CD8-positive, alpha-beta T cell (primary cell): ENCODE measurements at regions of chr6 and their contacts with region 1.

Region 1: DNA sequence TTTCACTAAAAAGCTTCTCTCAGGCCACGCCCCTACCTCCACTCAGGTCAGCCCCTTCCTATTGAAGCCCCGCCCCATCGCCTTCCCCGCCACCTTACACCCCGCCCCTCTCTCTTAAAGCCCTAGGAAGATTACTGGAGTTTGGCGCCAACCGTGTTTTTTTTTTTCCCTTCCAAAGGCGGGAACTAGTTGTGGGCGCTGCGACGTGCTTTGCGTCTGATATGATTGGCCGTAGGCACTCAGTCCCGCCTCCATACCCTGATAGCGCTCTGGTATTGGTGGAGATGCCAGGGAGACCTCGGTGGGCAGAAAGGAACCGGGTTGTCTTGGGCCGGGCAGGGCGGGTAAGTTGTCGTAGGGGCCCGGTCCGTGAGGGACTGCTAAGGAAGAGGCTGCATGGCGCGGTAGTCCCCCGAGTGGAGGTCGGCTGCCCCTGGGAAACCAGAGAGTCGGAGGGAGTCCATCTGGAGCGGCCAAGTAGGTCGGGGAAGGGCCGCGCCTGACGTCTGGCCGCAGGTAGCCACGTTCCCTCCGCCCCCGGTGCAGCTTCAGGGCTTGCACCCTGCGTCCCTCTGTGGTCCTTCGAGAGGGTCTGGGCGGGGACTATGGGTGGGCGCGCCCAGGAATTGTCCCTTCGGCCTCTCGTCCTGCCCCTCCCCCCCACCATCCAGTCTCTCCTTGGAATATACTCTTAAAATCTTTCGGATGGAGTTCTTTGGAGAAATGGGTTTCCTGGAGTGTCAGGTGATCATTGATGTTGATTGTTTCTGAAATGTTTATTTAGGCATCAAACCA is at the start of gene CASP8AP2:
- DNase-seq: peak; percentile 88 to 99 (median 93)
- ATAC-seq: peak; percentile 94
- H3K4me3 ChIP-seq: peak within 1 kb of the TSS; percentile 82 to 95
- H3K4me3 Mint-ChIP-seq: peak within 1 kb of the TSS; percentile 99
- H3K27ac ChIP-seq: peak within 1 kb of the TSS; percentile 71 to 84
- H3K27ac Mint-ChIP-seq: peak within 1 kb of the TSS; percentile 97
- H3K4me1 ChIP-seq: peaks cover 14% of the 10 kb centered on the region
- H3K4me1 Mint-ChIP-seq: peaks cover 35% of the 10 kb centered on the region
- H3K27me3 ChIP-seq: no peaks in the 10 kb centered on the region
- H3K27me3 Mint-ChIP-seq: no peaks in the 10 kb centered on the region
- CTCF ChIP-seq: no peak
- total RNA-seq, gene CASP8AP2: 13.1 to 14.8 TPM

Region 2: DNA sequence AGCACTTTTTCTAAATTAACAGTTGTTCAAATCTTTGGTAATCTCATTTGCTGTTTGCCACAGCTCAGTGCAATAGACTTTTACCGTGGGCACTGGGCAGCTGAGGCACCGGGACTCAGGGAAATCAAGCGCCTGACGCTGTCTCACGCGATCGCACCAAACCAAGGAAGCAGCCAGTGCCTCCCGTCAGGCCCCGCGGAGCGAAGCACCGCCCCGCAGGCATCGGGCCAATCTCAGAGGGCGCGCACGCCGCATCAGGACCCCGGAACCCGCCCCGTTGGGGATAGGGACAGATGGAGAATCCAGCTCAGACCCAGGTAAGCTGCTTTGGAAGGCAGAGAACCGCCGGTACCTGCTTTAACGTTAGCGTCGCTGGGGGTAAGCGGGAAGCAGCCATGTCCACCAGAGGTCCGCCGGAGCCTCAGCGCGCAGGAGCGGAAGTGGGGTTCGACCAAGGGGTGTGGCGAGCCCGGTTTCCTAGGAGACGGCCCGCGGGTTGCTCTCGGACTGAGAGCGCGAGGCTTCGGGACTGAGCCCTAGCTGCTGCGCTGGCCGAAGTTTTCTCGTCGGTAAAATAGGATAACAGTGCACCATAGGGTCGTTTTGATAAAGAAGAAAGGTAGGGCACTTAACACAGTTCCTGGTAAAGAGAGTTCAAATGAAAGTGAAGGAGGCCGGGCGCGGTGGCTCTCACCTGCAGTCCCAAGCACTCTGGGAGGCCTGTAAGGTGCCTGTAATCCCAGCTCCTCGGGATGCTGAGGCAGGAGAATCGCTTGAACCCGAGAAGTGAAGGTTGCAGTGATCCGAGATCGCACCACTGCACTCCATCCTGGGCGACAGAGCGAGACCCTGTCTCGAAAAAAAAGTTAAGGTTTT is 191.2 kb before region 1 on chr6 and contains the start of gene LYRM2:
- CTCF ChIA-PET with region 1: no interaction called
- POLR2A ChIA-PET with region 1: interaction called, 6 read pairs
- intact Hi-C with region 1: loop called in 1 of 2 experiments (anchors 5 kb)
- DNase-seq: peak; percentile 83 to 95 (median 89)
- ATAC-seq: peak; percentile 95
- H3K4me3 ChIP-seq: peak within 1 kb of the TSS; percentile 84 to 90
- H3K4me3 Mint-ChIP-seq: peak within 1 kb of the TSS; percentile 99
- H3K27ac ChIP-seq: peak within 1 kb of the TSS; percentile 91 to 98
- H3K27ac Mint-ChIP-seq: peak within 1 kb of the TSS; percentile 99
- H3K4me1 ChIP-seq: peaks cover 15% of the 10 kb centered on the region
- H3K4me1 Mint-ChIP-seq: peaks cover 34% of the 10 kb centered on the region
- H3K27me3 ChIP-seq: no peaks in the 10 kb centered on the region
- H3K27me3 Mint-ChIP-seq: no peaks in the 10 kb centered on the region
- CTCF ChIP-seq: no peak
- total RNA-seq, gene LYRM2: 16.7 to 17.8 TPM

Region 3: DNA sequence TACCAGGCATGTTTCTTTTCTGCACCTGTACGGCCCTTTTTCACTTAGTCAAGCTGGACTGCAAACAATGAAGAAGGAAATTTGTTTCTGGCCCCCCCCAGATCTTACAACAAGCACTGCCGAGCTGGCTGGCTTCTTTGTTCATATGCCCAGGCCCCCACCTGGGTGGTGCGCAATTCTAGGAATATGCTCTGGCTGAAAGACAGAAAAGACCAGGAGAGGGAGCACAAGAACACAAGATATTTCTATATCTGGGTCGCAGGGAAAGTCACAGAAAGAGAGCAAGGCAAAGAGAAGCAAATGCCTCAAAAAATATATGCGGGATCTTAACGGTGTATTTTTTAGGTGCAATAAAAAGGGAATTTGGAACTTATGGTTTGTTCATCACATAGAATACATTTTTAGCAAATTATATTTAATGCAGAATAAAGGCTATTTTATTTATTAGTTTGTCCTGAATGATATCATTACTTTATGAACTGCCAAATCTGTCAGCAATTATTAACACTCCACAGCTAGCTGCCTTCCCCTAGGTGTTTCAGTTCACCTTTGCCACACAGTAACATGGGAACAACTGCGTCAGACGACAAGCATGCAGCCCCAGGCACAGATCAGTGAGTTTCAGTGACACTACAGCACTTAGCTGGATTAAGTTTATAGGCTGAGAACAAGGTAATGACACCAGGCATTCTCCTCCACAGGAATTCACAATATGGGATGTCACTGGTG is 141.0 kb after region 1 on chr6:
- CTCF ChIA-PET with region 1: no interaction called
- POLR2A ChIA-PET with region 1: no interaction called
- intact Hi-C with region 1: no loop called
- DNase-seq: peak in 2 of 9 experiments; percentile 49 to 63
- ATAC-seq: peak; percentile 65
- H3K4me3 ChIP-seq: no peak overlapping the region
- H3K4me3 Mint-ChIP-seq: no peak overlapping the region
- H3K27ac ChIP-seq: no peak overlapping the region
- H3K27ac Mint-ChIP-seq: no peak overlapping the region
- H3K4me1 ChIP-seq: peaks cover 9% of the 10 kb centered on the region
- H3K4me1 Mint-ChIP-seq: peaks cover 26% of the 10 kb centered on the region
- H3K27me3 ChIP-seq: no peaks in the 10 kb centered on the region
- H3K27me3 Mint-ChIP-seq: no peaks in the 10 kb centered on the region
- CTCF ChIP-seq: peak; percentile 39